ENCODE measurements at regions of chr12 and their contacts with region 1.

Region 1: DNA sequence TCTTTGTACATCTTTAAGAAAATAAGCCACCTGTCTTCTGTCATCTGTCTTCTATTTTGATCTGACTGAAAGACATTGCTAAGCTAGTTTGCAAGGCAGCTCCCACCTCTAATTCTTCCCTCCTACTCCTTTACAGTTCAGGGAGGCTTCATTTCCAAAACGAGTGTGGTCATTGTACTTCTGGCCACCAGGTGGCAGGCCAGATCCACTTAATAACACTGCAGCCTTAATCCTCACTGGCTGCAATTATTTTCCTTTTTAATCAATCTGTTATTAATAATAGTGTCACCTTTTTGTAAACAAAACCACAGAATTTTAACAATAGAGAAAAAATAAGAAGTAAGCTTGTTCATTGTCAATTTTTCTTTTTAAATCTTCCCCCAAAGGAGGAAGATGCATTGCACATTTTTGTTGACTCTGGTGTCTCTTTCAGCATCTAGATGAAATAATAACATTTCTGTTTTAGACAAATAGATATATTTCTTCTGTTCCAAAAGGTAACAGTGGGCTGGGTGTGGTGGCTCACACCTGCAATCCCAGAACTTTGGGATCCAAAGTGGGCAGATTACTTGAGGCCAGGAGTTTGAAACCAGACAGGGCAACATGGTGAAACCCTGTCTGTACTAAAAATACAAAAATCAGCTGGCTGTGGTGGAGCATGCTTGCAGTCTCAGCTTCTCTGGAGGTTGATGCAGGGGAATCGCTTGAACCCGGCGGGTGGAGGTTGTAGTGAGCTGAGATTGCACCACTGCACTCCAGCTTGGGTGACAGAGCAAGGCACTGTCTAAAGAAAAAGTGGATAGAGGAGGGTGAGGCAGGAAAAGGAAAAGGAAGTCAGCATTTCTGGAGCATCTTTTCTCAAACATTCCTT is 23.3 kb downstream of the GABARAPL1 start:
- DNase-seq: peak; percentile 24 to 45 (median 42)
- ATAC-seq: peak; percentile 47; the same call in 1 of the 3 replicates
- H3K4me3 ChIP-seq: no peak overlapping the region
- H3K27ac ChIP-seq: no peak overlapping the region
- H3K4me1 ChIP-seq: no peaks in the 10 kb centered on the region
- H3K27me3 ChIP-seq: no peaks in the 10 kb centered on the region
- CTCF ChIP-seq: peak; percentile 43 to 69 (median 60)
- EP300 ChIP-seq: no peak
- POLR2A ChIP-seq: no peak
- RAD21 ChIP-seq: peak; percentile 73 to 84

Region 2: DNA sequence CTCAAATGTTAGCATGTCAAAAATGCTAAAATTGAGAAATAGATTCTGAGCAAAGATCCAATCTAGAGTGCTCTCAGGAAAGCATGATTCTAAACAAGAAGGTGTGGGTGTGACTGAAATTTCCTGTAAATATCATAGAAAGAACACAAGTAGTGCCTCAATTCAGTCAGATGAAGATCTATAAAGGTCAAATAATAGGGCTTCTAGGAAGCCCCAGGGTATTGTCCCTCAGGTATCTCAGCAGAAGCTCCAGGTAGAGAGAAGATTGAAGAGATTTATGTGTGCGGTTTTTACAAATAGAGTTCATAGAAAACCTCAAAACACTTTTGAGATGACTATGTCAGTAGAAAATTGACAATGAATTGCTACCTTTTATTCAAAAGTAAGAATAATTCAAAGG is 84.6 kb after region 1 on chr12:
- CTCF ChIA-PET with region 1: no interaction called
- POLR2A ChIA-PET with region 1: no interaction called
- in situ Hi-C with region 1: loop called (anchors 10 kb)
- intact Hi-C with region 1: no loop called
- DNase-seq: no peak
- ATAC-seq: no peak
- H3K4me3 ChIP-seq: no peak overlapping the region
- H3K27ac ChIP-seq: no peak overlapping the region
- H3K4me1 ChIP-seq: no peaks in the 10 kb centered on the region
- H3K27me3 ChIP-seq: no peaks in the 10 kb centered on the region
- CTCF ChIP-seq: no peak
- EP300 ChIP-seq: no peak
- POLR2A ChIP-seq: no peak
- RAD21 ChIP-seq: no peak

Region 3: DNA sequence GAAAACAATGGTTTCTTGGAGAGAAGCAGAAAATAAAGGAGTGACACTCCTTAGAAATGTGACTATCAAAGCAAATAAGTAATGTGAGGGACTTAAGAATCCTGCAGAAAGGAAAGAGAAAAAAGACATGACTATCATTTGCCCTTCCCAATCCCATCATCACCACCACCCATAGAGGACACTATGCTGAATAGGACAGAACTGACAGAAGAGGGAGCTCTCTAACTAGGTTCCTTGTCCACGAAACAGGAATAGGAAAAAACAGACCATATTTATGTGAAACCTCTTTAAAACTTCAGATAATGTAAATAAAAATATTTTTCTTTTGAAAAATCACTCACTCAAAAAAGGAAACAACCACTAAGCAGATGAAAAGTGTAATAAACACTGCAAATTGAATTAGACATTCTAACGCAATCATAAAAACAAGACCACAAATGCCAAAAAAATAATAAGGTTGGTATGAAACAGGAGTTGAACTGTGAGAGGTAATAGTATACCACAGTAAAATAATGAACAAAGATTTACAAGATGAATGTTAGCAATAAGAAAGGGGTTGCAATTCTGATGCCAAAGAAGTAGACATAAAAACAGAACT is 95.7 kb after region 1 on chr12:
- CTCF ChIA-PET with region 1: no interaction called
- POLR2A ChIA-PET with region 1: no interaction called
- in situ Hi-C with region 1: loop called (anchors 10 kb)
- intact Hi-C with region 1: loop called (anchors 10 kb)
- DNase-seq: peak; percentile 17 to 56 (median 34)
- ATAC-seq: peak; percentile 81
- H3K4me3 ChIP-seq: no peak overlapping the region
- H3K27ac ChIP-seq: no peak overlapping the region
- H3K4me1 ChIP-seq: no peaks in the 10 kb centered on the region
- H3K27me3 ChIP-seq: no peaks in the 10 kb centered on the region
- CTCF ChIP-seq: peak; percentile 56 to 89 (median 82); a peak in 5 of 6 replicates
- EP300 ChIP-seq: no peak
- POLR2A ChIP-seq: no peak
- RAD21 ChIP-seq: peak; percentile 84 to 91

Region 4: DNA sequence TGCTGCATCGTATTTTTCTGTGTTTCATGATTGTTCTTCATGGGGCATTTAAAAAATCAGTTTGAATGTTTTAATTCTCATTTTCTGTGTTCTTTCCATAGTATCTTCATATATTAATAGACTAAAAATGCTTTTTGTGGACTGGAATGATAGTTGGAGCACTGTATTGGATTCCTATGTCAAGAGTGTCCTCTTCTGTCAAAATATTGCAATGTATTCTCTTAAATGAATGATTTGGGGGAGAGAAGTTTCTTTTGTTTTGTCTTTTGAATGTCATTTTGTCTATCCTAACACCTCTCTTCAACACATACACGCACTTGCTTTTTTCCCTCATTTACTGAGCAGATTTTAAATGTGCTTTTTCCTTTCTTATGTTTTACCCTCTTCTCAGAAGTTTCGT is 265.0 kb after region 1 on chr12:
- CTCF ChIA-PET with region 1: interaction called, 3 read pairs
- POLR2A ChIA-PET with region 1: no interaction called
- in situ Hi-C with region 1: no loop called
- intact Hi-C with region 1: loop called (anchors 5 kb)
- DNase-seq: no peak
- ATAC-seq: no peak
- H3K4me3 ChIP-seq: no peak overlapping the region
- H3K27ac ChIP-seq: no peak overlapping the region
- H3K4me1 ChIP-seq: peaks cover 0 to 4% of the 10 kb centered on the region in 2 experiments; a peak in 1 of 5 replicates
- H3K27me3 ChIP-seq: no peaks in the 10 kb centered on the region; a peak in 1 of 5 replicates
- CTCF ChIP-seq: peak in 2 of 3 experiments; percentile 19 to 43; a peak in 3 of 6 replicates
- EP300 ChIP-seq: no peak
- POLR2A ChIP-seq: no peak
- RAD21 ChIP-seq: peak in 1 of 2 experiments; percentile 70; a peak in 2 of 4 replicates

Region 5: GRCh38 chr12:10562306-10562933 is 326.4 kb after region 1 on chr12:
- CTCF ChIA-PET with region 1: interaction called, 14 read pairs
- POLR2A ChIA-PET with region 1: no interaction called
- in situ Hi-C with region 1: loop called (anchors 10 kb)
- intact Hi-C with region 1: loop called (anchors 2 kb)
- DNase-seq: peak; percentile 10 to 41 (median 12)
- ATAC-seq: no peak
- H3K4me3 ChIP-seq: no peak overlapping the region
- H3K27ac ChIP-seq: no peak overlapping the region
- H3K4me1 ChIP-seq: no peaks in the 10 kb centered on the region
- H3K27me3 ChIP-seq: no peaks in the 10 kb centered on the region
- CTCF ChIP-seq: peak in 2 of 3 experiments; percentile 50 to 74; a peak in 3 of 6 replicates
- EP300 ChIP-seq: no peak
- POLR2A ChIP-seq: no peak
- RAD21 ChIP-seq: peak; percentile 80 to 86

Region 6: DNA sequence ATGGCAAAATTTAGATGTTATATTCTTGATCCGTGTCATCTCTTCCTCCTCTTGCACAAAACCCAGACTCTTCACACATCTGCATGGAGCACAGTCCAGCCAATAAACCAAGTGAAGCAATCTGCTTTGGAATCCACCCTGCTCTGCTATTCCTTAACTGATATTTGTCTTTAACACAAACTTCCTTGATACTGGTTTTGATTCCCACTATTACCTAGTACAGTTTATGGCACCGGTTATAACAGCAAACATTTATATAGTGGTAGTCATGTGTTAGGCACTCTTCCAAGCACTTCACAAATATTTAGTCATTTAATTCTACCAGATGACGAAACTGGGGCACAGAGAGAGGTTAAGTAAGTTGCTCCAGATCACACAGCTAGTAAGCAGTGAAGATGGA is 425.3 kb after region 1 on chr12:
- CTCF ChIA-PET with region 1: no interaction called
- POLR2A ChIA-PET with region 1: no interaction called
- in situ Hi-C with region 1: no loop called
- intact Hi-C with region 1: no loop called
- DNase-seq: no peak
- ATAC-seq: no peak
- H3K4me3 ChIP-seq: no peak overlapping the region
- H3K27ac ChIP-seq: no peak overlapping the region
- H3K4me1 ChIP-seq: no peaks in the 10 kb centered on the region
- H3K27me3 ChIP-seq: no peaks in the 10 kb centered on the region
- CTCF ChIP-seq: no peak
- EP300 ChIP-seq: no peak
- POLR2A ChIP-seq: no peak
- RAD21 ChIP-seq: no peak

Region 7: GRCh38 chr12:10749700-10750384 is 513.8 kb after region 1 on chr12:
- CTCF ChIA-PET with region 1: no interaction called
- POLR2A ChIA-PET with region 1: no interaction called
- in situ Hi-C with region 1: no loop called
- intact Hi-C with region 1: loop called (anchors 10 kb)
- DNase-seq: peak; percentile 22 to 79 (median 46)
- ATAC-seq: peak; percentile 86
- H3K4me3 ChIP-seq: no peak overlapping the region
- H3K27ac ChIP-seq: no peak overlapping the region
- H3K4me1 ChIP-seq: no peaks in the 10 kb centered on the region; a peak in 2 of 5 replicates
- H3K27me3 ChIP-seq: peaks cover 0 to 6% of the 10 kb centered on the region in 2 experiments; a peak in 2 of 5 replicates
- CTCF ChIP-seq: peak; percentile 86 to 97 (median 95)
- EP300 ChIP-seq: peak; percentile 38; the same call in 1 of the 2 replicates
- POLR2A ChIP-seq: no peak
- RAD21 ChIP-seq: peak; percentile 70 to 86

Region 8: GRCh38 chr12:11209108-11209507 is 973.1 kb after region 1 on chr12:
- CTCF ChIA-PET with region 1: no interaction called
- POLR2A ChIA-PET with region 1: no interaction called
- in situ Hi-C with region 1: loop called (anchors 25 kb)
- intact Hi-C with region 1: no loop called
- DNase-seq: no peak
- ATAC-seq: no peak
- H3K4me3 ChIP-seq: no peak overlapping the region
- H3K27ac ChIP-seq: no peak overlapping the region
- H3K4me1 ChIP-seq: no peaks in the 10 kb centered on the region; a peak in 1 of 5 replicates
- H3K27me3 ChIP-seq: no peaks in the 10 kb centered on the region
- CTCF ChIP-seq: no peak
- EP300 ChIP-seq: no peak
- POLR2A ChIP-seq: no peak
- RAD21 ChIP-seq: no peak

Measured in K562 (cell line).